ENCODE measurements at regions of chr7 and their contacts with region 1.

Region 1: GRCh38 chr7:128963327-128963757 is 25.6 kb downstream of the IRF5 start:
- DNase-seq: peak; percentile 34
- H3K4me3 Mint-ChIP-seq: peak overlapping the region; percentile 57
- H3K27ac Mint-ChIP-seq: peak overlapping the region; percentile 72
- H3K4me1 Mint-ChIP-seq: peaks cover 43% of the 10 kb centered on the region
- H3K27me3 Mint-ChIP-seq: no peaks in the 10 kb centered on the region

Region 2: GRCh38 chr7:129009437-129009836 is 46.1 kb after region 1 on chr7:
- intact Hi-C with region 1: loop called (anchors 1 kb)
- DNase-seq: no peak
- H3K4me3 Mint-ChIP-seq: no peak overlapping the region
- H3K27ac Mint-ChIP-seq: peak overlapping the region; percentile 77
- H3K4me1 Mint-ChIP-seq: peaks cover 29% of the 10 kb centered on the region
- H3K27me3 Mint-ChIP-seq: no peaks in the 10 kb centered on the region

Measured in activated T-helper 1 cell treated with anti-CD3 and anti-CD28 coated beads, Interleukin-12 subunit alpha, Interleukin-12 subunit beta, Interleukin-2, Interleukin-4 antibody, amounts not matched to agents 30 ng/mL and 10 ng/mL and 1 ng/mL, durations not matched to agents 14 hours and 24 hours and 36 hours (primary cell).